CD8-positive, alpha-beta T cell (primary cell): ENCODE measurements at regions of chr9 and their contacts with region 1.

Region 1: DNA sequence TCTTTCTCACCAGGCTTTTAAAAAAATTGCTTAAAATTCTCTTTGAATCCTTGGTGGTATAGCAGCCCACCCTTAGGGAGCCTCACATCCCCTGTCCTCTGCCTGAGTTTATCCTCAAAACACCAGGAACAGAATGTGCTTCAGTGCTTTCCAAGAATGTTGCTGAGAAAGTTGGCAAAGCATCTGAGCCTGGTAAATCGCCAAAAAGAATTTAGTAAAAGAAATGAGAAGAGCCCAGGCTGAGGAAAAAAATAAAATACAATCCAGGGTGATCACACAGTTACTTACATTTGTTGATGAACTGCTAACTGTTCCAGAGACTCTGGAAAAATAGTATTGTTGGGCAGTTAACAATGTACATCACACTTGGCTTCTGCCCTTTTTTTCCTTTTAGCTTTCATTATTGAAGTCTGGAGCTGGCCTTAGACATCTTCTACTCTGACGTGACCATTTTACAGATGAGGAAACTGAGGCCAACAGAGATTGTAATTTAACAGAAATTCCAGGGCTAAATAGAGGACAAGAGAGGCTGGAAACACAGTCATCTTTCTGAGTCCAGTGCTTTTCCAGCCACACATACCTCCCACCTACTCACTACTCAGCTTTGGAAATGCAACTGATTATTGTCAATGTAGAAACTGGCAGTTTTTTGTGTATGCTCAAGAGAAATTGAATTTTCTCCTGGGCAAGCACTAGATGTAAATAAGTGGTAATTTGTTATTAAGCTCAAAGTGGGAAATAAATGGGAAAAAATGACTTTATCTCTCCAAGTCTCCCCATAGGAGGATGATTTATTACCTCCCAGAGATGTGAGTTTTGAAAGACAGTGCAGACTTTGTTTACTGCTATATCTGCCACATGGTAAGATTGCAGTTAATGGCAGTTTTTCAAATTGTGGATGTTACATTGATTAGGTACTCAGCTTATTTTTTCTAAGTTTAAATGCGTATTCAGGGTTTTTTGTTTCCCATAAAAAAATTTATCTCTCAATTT is 86.7 kb upstream of the ALDH1A1 start:
- DNase-seq: no peak
- ATAC-seq: no peak
- H3K4me3 ChIP-seq: no peak overlapping the region
- H3K4me3 Mint-ChIP-seq: no peak overlapping the region
- H3K27ac ChIP-seq: no peak overlapping the region
- H3K27ac Mint-ChIP-seq: no peak overlapping the region
- H3K4me1 ChIP-seq: no peaks in the 10 kb centered on the region
- H3K4me1 Mint-ChIP-seq: no peaks in the 10 kb centered on the region
- H3K27me3 ChIP-seq: no peaks in the 10 kb centered on the region
- H3K27me3 Mint-ChIP-seq: peaks cover 19% of the 10 kb centered on the region
- CTCF ChIP-seq: no peak

Region 2: DNA sequence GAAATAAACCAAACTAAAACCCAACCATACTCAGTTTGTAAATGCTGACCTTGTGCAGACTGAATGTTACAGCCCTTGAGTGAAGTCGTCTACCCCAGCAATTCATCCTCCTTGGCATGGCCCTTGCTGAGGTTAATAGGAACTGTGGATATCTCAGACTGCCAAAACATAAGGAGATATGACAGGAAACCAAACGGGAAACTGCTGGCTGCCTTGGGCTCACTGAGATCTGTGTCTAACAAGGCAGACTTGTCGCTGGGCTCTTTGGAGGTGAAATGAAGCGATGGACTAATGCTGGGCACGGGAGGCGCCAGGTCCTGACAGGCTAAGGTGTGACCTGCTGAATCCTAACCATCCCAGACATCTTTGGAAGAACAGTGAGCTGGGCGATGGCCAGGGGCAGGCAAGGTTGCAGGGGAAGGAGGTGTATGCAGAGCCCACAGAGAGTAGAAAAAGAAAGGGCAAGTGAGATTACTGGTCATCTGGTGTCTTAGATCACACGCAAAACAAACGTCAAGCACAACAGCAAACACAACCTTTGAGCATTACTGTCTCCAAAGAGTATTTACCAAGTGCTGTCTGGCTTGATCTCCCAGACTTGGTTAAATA is 42.1 kb before region 1 on chr9:
- CTCF ChIA-PET with region 1: no interaction called
- POLR2A ChIA-PET with region 1: no interaction called
- intact Hi-C with region 1: loop called in 1 of 2 experiments (anchors 5 kb)
- DNase-seq: peak in 1 of 9 experiments; percentile 1
- ATAC-seq: no peak
- H3K4me3 ChIP-seq: no peak overlapping the region
- H3K4me3 Mint-ChIP-seq: no peak overlapping the region
- H3K27ac ChIP-seq: no peak overlapping the region
- H3K27ac Mint-ChIP-seq: no peak overlapping the region
- H3K4me1 ChIP-seq: no peaks in the 10 kb centered on the region
- H3K4me1 Mint-ChIP-seq: peaks cover 4% of the 10 kb centered on the region
- H3K27me3 ChIP-seq: no peaks in the 10 kb centered on the region
- H3K27me3 Mint-ChIP-seq: no peaks in the 10 kb centered on the region
- CTCF ChIP-seq: no peak

Region 3: GRCh38 chr9:73059247-73059646 is 19.7 kb after region 1 on chr9:
- CTCF ChIA-PET with region 1: no interaction called
- POLR2A ChIA-PET with region 1: no interaction called
- intact Hi-C with region 1: no loop called
- DNase-seq: no peak
- ATAC-seq: no peak
- H3K4me3 ChIP-seq: no peak overlapping the region
- H3K4me3 Mint-ChIP-seq: no peak overlapping the region
- H3K27ac ChIP-seq: no peak overlapping the region
- H3K27ac Mint-ChIP-seq: no peak overlapping the region
- H3K4me1 ChIP-seq: no peaks in the 10 kb centered on the region
- H3K4me1 Mint-ChIP-seq: no peaks in the 10 kb centered on the region
- H3K27me3 ChIP-seq: no peaks in the 10 kb centered on the region
- H3K27me3 Mint-ChIP-seq: peaks cover 3% of the 10 kb centered on the region
- CTCF ChIP-seq: no peak

Region 4: GRCh38 chr9:74138182-74138581 is 1098.6 kb after region 1 on chr9:
- CTCF ChIA-PET with region 1: no interaction called
- POLR2A ChIA-PET with region 1: no interaction called
- intact Hi-C with region 1: no loop called
- DNase-seq: no peak
- ATAC-seq: no peak
- H3K4me3 ChIP-seq: no peak overlapping the region
- H3K4me3 Mint-ChIP-seq: no peak overlapping the region
- H3K27ac ChIP-seq: no peak overlapping the region
- H3K27ac Mint-ChIP-seq: no peak overlapping the region
- H3K4me1 ChIP-seq: no peaks in the 10 kb centered on the region
- H3K4me1 Mint-ChIP-seq: no peaks in the 10 kb centered on the region
- H3K27me3 ChIP-seq: no peaks in the 10 kb centered on the region
- H3K27me3 Mint-ChIP-seq: no peaks in the 10 kb centered on the region
- CTCF ChIP-seq: no peak

Region 5: DNA sequence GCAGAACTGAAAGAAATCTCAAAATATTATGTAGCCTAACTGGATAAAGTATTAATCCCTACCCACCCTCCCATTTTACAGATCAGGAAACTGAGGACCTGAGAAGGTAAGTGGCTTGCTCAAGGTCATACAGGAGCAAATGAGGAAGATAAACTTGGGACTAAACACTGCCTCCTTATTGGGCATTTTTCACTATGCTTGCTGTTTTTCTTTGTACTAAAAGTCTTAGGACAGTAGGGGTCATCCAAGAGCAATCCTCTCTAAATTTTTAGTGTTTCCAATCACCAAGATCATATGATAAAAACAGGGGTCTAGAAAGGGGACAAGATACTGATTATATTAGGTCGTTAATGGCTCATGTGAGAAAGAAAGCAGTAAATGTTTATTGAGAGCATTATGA is 1538.4 kb after region 1 on chr9:
- CTCF ChIA-PET with region 1: no interaction called
- POLR2A ChIA-PET with region 1: no interaction called
- intact Hi-C with region 1: no loop called
- DNase-seq: no peak
- ATAC-seq: no peak
- H3K4me3 ChIP-seq: no peak overlapping the region
- H3K4me3 Mint-ChIP-seq: no peak overlapping the region
- H3K27ac ChIP-seq: no peak overlapping the region
- H3K27ac Mint-ChIP-seq: no peak overlapping the region
- H3K4me1 ChIP-seq: no peaks in the 10 kb centered on the region
- H3K4me1 Mint-ChIP-seq: no peaks in the 10 kb centered on the region
- H3K27me3 ChIP-seq: no peaks in the 10 kb centered on the region
- H3K27me3 Mint-ChIP-seq: peaks cover 1% of the 10 kb centered on the region
- CTCF ChIP-seq: no peak